CD4-positive, alpha-beta T cell (primary cell): ENCODE measurements at regions of chr17 and their contacts with region 1.

Region 1: DNA sequence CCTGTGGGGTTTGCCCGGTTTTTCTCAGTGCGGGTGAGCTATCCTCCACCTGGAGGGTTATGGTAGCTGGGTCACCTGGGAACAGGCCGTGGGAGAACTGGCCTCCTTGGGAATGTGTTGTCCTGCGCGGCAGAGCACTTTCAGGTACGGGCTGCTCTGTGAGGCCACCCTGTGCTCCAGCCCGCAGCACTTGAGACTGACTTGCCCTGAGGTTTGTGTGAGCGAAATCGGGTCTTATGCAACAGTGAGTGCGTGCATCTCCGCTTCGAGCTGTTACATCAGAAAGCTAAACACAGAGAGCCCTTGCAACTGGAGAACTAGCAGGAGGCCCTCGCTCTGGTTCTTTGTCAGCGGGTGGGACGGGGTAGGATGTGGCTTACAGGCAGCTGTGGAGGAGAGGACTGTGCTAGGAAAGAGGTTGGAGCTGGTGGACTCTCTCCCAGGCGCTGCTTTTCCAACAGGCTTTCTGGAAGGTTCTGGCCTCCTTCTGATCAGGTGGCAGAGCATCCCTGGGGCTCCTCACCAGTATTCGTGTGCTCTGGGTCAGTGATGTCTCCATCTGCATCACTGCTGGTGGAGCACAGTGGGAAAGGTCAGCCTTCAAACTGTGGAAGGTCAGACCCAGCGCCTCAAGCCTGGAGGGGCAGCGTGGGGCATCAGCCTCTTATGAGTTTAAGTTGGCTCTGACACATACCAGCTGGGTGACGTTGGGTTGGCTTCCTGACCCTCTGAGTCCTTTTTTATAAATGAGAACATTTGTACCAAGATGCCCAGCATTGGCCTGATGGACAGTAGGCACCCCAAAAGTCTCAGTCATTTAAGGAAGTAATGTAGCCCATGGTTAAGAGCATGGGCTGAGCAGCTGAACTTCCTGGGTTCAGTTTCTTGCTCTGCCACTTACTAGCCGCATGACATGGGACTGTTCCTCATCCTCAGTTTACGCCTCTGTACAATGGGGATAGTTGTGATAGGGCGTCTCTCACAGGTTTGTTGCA is 76.3 kb downstream of the KSR1 start:
- DNase-seq: peak in 3 of 14 experiments; percentile 25 to 64 (median 60)
- ATAC-seq: no peak
- H3K4me3 ChIP-seq: no peak overlapping the region
- H3K4me3 Mint-ChIP-seq: no peak overlapping the region
- H3K27ac ChIP-seq: no peak overlapping the region
- H3K27ac Mint-ChIP-seq: no peak overlapping the region
- H3K4me1 ChIP-seq: peaks cover 4% of the 10 kb centered on the region
- H3K4me1 Mint-ChIP-seq: peaks cover 10% of the 10 kb centered on the region
- H3K27me3 ChIP-seq: no peaks in the 10 kb centered on the region
- H3K27me3 Mint-ChIP-seq: no peaks in the 10 kb centered on the region
- CTCF ChIP-seq: no peak

Region 2: DNA sequence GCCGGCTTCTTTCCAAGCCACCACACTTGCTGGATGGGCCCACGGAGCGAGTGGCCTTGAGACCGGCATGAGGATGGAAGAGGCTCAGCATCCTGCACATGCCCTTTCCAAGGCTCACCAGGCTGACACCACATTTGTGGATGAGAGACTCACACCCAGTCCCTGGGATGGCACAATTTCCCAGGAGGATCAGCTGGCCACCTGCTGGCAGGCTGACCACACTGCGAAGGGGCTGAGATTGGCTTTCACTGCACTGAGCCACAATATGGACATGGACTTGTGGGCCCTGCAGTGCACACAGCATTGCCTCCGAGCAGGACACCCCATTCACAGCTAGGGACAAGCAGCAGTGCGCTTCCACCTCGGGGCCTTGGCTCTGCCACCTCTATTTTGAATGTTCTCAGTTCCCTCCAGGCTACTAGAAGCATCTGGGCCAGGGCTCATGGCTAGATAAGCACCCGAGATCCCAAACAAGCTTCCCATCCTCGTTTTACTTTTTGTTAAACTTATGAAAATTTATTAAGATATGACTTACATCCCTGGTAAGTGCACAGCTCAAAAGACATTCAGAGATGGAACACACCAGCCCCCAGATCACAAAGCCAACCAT is 101.6 kb before region 1 on chr17:
- CTCF ChIA-PET with region 1: no interaction called
- POLR2A ChIA-PET with region 1: no interaction called
- intact Hi-C with region 1: loop called in 1 of 2 experiments (anchors 10 kb)
- DNase-seq: peak in 3 of 14 experiments; percentile 12 to 36 (median 22)
- ATAC-seq: no peak
- H3K4me3 ChIP-seq: no peak overlapping the region
- H3K4me3 Mint-ChIP-seq: no peak overlapping the region
- H3K27ac ChIP-seq: no peak overlapping the region
- H3K27ac Mint-ChIP-seq: no peak overlapping the region
- H3K4me1 ChIP-seq: no peaks in the 10 kb centered on the region
- H3K4me1 Mint-ChIP-seq: no peaks in the 10 kb centered on the region
- H3K27me3 ChIP-seq: no peaks in the 10 kb centered on the region
- H3K27me3 Mint-ChIP-seq: no peaks in the 10 kb centered on the region
- CTCF ChIP-seq: no peak

Region 3: GRCh38 chr17:27489045-27489715 is 43.4 kb before region 1 on chr17:
- CTCF ChIA-PET with region 1: no interaction called
- POLR2A ChIA-PET with region 1: no interaction called
- intact Hi-C with region 1: loop called in 1 of 2 experiments (anchors 10 kb)
- DNase-seq: peak in 2 of 14 experiments; percentile 27 to 31
- ATAC-seq: no peak
- H3K4me3 ChIP-seq: no peak overlapping the region
- H3K4me3 Mint-ChIP-seq: no peak overlapping the region
- H3K27ac ChIP-seq: no peak overlapping the region
- H3K27ac Mint-ChIP-seq: no peak overlapping the region
- H3K4me1 ChIP-seq: no peaks in the 10 kb centered on the region
- H3K4me1 Mint-ChIP-seq: peaks cover 4% of the 10 kb centered on the region
- H3K27me3 ChIP-seq: no peaks in the 10 kb centered on the region
- H3K27me3 Mint-ChIP-seq: no peaks in the 10 kb centered on the region
- CTCF ChIP-seq: no peak

Region 4: GRCh38 chr17:27879987-27880608 is 347.5 kb after region 1 on chr17:
- CTCF ChIA-PET with region 1: no interaction called
- POLR2A ChIA-PET with region 1: no interaction called
- intact Hi-C with region 1: no loop called
- DNase-seq: peak; percentile 28 to 77 (median 55)
- ATAC-seq: peak; percentile 73
- H3K4me3 ChIP-seq: no peak overlapping the region
- H3K4me3 Mint-ChIP-seq: no peak overlapping the region
- H3K27ac ChIP-seq: no peak overlapping the region
- H3K27ac Mint-ChIP-seq: no peak overlapping the region
- H3K4me1 ChIP-seq: peaks cover 18% of the 10 kb centered on the region
- H3K4me1 Mint-ChIP-seq: peaks cover 22% of the 10 kb centered on the region
- H3K27me3 ChIP-seq: no peaks in the 10 kb centered on the region
- H3K27me3 Mint-ChIP-seq: no peaks in the 10 kb centered on the region
- CTCF ChIP-seq: peak; percentile 66